Gastrocnemius medialis (tissue), 4 donors: ENCODE measurements at regions of chr20 and their contacts with region 1.

Region 1: DNA sequence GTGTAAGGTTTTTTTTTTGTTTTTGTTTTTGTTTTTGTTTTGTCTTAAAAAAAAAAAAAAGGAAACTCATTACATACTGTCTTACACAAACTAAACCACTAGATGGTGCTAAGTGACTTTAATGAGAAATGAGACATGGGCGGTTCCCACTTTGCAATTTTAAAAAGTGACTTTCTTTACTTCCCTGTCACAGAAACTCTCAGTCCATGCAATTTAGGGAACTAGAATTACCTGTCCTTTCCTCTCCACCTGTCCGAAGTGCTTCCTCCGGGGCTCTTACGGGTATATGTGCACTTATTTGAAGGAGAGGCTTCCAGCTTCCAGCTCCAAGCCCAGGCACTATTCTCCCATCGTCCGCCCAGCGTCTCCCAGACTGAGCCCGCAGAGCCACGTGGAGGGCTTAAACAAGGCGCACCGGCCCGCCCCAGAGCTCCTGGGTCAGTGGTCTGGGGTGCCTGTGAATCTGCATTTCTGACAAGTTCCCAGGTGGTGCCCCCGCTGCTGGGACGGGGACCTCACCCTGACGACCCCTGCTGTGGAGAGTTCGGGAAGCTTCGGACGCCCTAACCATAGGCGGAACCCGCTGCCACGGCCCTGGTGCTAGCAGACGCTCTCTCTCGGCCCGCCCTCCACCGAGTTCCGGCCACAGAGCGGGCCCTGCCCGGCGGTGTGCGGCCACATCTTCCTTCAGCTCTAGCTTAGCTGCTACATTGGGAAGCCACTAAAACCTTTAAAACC is 26.1 kb downstream of the BFSP1 start:
- DNase-seq: no peak
- ATAC-seq: peak; percentile 81 to 88
- H3K4me3 ChIP-seq: peak overlapping the region; percentile 47 to 63 (median 55)
- H3K27ac ChIP-seq: peak overlapping the region in 2 of 4 donors; percentile 30 to 42
- H3K4me1 ChIP-seq: peaks cover 8 to 11% of the 10 kb centered on the region in 2 donors
- H3K27me3 ChIP-seq: no peaks in the 10 kb centered on the region
- CTCF ChIP-seq: peak; percentile 40 to 75 (median 58)
- POLR2A ChIP-seq: no peak

Region 2: DNA sequence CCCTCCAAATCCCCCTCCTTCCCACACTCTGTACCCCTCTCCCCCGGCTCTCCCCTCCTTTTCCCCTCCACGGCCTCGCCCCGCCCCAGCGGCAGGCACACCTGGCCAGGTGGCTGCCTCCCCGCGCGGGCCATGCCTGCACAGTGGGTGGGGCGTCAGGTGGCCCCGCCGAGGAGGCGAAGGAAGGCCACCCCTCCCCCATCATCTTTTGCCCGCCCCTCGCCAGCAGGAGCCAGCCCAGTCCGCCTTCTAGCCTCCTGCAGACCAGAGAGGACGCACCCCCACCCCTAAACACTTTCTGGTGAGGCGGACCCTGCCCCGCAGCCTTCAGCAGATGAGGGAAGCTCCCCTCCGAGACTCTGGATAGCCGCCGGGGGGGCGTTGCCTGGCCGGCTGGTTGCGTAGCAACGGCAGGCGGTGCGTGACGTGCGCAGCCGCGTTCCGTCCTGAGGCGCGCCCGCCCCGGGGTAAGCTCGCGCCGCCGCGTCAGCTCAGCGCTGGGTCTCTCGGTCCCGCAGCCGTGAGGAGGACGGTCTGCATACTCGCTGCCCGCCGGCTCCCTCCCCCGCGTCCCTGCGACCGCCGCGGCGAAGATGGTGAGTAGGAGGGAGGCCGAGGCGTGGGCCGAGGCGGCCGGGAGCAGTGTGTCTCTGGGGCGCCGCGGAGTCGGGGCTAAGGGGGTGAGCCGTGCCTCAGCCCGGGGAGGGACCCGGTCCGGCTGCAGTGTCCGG is 64.7 kb after region 1 on chr20 and contains the start of gene DSTN:
- in situ Hi-C with region 1: no loop called
- intact Hi-C with region 1: loop called (anchors 2 kb)
- DNase-seq: peak; percentile 85 to 86
- ATAC-seq: peak; percentile 88 to 89
- H3K4me3 ChIP-seq: peak within 1 kb of the TSS; percentile 96 to 99 (median 98)
- H3K27ac ChIP-seq: peak within 1 kb of the TSS; percentile 99 to 100 (median 99)
- H3K4me1 ChIP-seq: peaks cover 22 to 38% of the 10 kb centered on the region in 2 donors
- H3K27me3 ChIP-seq: no peaks in the 10 kb centered on the region
- CTCF ChIP-seq: peak in 1 of 5 experiments; percentile 10
- POLR2A ChIP-seq: peak; percentile 97 to 98
- total RNA-seq, gene DSTN: 79.2 to 128 (median 88.5) TPM

Region 3: GRCh38 chr20:17898548-17898994 is 393.5 kb after region 1 on chr20:
- in situ Hi-C with region 1: loop called in 2 of 4 experiments (anchors 10 to 25 kb)
- intact Hi-C with region 1: loop called (anchors 2 kb)
- DNase-seq: peak; percentile 40 to 59
- ATAC-seq: peak; percentile 51 to 81
- H3K4me3 ChIP-seq: no peak overlapping the region
- H3K27ac ChIP-seq: no peak overlapping the region
- H3K4me1 ChIP-seq: peaks cover 19 to 23% of the 10 kb centered on the region in 2 donors
- H3K27me3 ChIP-seq: no peaks in the 10 kb centered on the region
- CTCF ChIP-seq: peak; percentile 84 to 94 (median 85)
- POLR2A ChIP-seq: no peak

Region 4: DNA sequence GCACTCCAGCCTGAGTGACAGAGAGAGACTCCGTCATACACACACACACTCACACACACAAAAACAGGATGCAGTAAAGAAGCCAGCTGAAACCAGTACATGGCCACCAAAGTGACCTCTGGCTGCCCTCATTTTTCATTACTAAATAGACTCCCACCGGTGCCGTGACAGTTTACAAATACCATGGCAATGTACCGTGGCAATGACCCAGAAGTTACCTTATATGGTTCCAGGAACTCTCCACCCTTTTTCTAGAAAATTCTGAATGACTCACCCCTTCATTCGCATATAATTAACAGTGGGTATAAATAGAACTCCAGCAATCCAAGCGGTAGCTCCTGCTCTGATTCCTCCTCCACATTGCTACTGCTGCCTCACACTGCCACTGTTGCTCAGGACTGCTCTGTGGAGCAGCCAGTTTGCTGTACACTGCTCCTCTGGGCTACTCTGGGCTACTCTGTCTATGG is 405.8 kb after region 1 on chr20:
- in situ Hi-C with region 1: loop called in 2 of 4 experiments (anchors 10 to 25 kb)
- intact Hi-C with region 1: no loop called
- DNase-seq: peak in 1 of 2 donors; percentile 61
- ATAC-seq: peak; percentile 78 to 84
- H3K4me3 ChIP-seq: no peak overlapping the region
- H3K27ac ChIP-seq: peak overlapping the region in 3 of 4 donors; percentile 55 to 69 (median 56)
- H3K4me1 ChIP-seq: peaks cover 8 to 19% of the 10 kb centered on the region in 2 donors
- H3K27me3 ChIP-seq: no peaks in the 10 kb centered on the region
- CTCF ChIP-seq: no peak
- POLR2A ChIP-seq: peak in 1 of 2 donors; percentile 20

Region 5: DNA sequence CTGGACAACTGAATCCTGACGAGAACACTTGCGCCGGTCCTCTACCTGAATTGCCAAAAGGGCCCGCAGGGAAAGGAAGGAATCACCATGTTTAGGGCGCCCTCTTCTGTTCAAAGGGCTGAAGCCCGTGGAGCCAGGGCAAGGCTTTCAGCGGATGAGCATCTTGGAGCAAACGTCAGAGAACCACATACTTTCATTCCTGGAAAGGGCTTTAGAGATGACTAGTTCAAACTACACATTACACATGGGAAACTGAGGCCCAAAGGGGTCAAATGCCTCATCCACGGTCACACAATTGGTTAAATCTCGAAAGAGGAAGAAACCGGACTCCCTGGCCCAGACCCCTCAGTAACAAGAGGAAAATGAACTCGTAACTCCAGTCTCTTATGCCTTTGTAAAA is 771.8 kb after region 1 on chr20:
- in situ Hi-C with region 1: loop called in 1 of 4 experiments (anchors 25 kb)
- intact Hi-C with region 1: loop called (anchors 2 kb)
- DNase-seq: peak in 1 of 2 donors; percentile 45
- ATAC-seq: peak; percentile 80 to 87
- H3K4me3 ChIP-seq: no peak overlapping the region
- H3K27ac ChIP-seq: no peak overlapping the region
- H3K4me1 ChIP-seq: peaks cover 0 to 4% of the 10 kb centered on the region in 2 donors
- H3K27me3 ChIP-seq: peaks cover 2 to 7% (median 4%) of the 10 kb centered on the region in 3 donors
- CTCF ChIP-seq: peak in 4 of 5 experiments; percentile 46 to 69 (median 52)
- POLR2A ChIP-seq: no peak